WTC11 (cell line): ENCODE measurements at regions of chr21 and their contacts with region 1.

Region 1: DNA sequence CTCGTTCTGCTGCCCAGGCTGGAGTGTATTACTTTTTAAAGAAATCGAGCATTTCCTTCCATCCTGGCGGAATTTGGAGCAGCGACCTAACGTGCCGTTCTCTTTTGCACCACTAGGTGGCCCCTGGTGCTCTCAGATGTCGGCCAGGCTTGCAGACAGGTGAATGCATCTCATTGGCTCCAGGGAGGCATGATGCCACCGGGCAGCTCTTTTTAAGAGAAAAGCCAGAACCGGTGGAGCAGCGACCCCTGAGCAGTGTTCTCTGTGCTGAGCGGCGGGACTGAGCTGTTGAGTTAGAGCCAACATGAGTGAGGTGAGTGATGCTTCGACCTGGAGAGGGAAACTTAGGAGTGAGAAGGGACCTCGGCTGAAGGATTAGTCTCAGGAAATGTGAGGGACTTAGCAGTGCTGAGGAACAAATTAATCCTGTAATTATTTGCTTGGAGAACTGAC is at the start of gene PCP4:
- DNase-seq: peak; percentile 87
- ATAC-seq: peak; percentile 100
- H3K4me3 Mint-ChIP-seq: peak within 1 kb of the TSS; percentile 3; the same call in 1 of the 2 replicates
- H3K27ac Mint-ChIP-seq: no peak within 1 kb of the TSS
- H3K4me1 Mint-ChIP-seq: peaks cover 10% of the 10 kb centered on the region
- H3K27me3 Mint-ChIP-seq: no peaks in the 10 kb centered on the region
- CTCF ChIP-seq: peak; percentile 94
- total RNA-seq, gene PCP4: 1.4 to 2.1 TPM (median 1.6 TPM) in 3 replicates

Region 2: DNA sequence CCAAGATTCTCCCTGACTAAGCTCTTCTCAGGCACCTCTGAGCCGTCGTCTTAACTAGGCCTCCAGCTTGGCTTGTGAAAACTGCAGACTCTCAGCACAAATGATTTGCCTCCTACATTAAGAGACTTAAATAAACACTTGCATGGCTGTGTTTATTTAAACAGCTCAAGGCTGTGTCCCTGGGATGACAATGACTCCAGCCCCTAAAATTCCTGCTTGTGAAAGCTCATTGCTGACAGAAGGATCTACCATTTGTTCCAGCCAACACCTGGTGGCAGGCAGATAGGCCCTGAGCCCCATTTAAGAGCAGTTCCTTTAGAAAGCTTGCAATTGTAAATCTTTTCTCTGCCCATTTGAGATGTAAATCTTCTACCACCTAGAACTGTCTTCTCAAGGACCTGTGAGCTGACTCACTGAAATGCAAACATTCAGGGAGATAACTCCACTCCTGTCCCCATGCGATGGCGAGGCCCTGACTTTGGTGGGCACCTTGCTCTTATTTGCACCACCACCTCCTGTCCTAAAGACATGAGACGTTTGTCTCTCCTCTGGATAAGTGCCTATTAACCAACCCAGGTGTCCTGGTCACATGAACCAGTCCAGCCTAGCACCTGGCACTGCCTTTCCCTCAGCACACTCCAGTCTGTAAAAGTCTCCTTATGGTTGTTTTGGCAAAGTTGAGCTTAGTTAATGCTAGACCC is 15.1 kb before region 1 on chr21:
- CTCF ChIA-PET with region 1: interaction called, 42 read pairs
- POLR2A ChIA-PET with region 1: no interaction called
- DNase-seq: no peak
- ATAC-seq: no peak
- H3K4me3 Mint-ChIP-seq: no peak overlapping the region
- H3K27ac Mint-ChIP-seq: peak overlapping the region; percentile 2; the same call in 1 of the 2 replicates
- H3K4me1 Mint-ChIP-seq: peaks cover 21% of the 10 kb centered on the region
- H3K27me3 Mint-ChIP-seq: no peaks in the 10 kb centered on the region; the same call in 1 of the 2 replicates
- CTCF ChIP-seq: no peak

Region 3: GRCh38 chr21:39885119-39885848 is 18.1 kb after region 1 on chr21:
- CTCF ChIA-PET with region 1: interaction called, 10 read pairs
- POLR2A ChIA-PET with region 1: no interaction called
- DNase-seq: no peak
- ATAC-seq: no peak
- H3K4me3 Mint-ChIP-seq: no peak overlapping the region
- H3K27ac Mint-ChIP-seq: no peak overlapping the region
- H3K4me1 Mint-ChIP-seq: no peaks in the 10 kb centered on the region
- H3K27me3 Mint-ChIP-seq: no peaks in the 10 kb centered on the region
- CTCF ChIP-seq: no peak

Region 4: GRCh38 chr21:39924577-39925308 is 57.5 kb after region 1 on chr21:
- CTCF ChIA-PET with region 1: interaction called, 14 read pairs
- POLR2A ChIA-PET with region 1: no interaction called
- DNase-seq: peak; percentile 47
- ATAC-seq: peak; percentile 81
- H3K4me3 Mint-ChIP-seq: no peak overlapping the region
- H3K27ac Mint-ChIP-seq: peak overlapping the region; percentile 82; the same call in 1 of the 2 replicates
- H3K4me1 Mint-ChIP-seq: peaks cover 15% of the 10 kb centered on the region
- H3K27me3 Mint-ChIP-seq: no peaks in the 10 kb centered on the region
- CTCF ChIP-seq: no peak